ENCODE measurements at regions of chr4 and their contacts with region 1.

Region 1: DNA sequence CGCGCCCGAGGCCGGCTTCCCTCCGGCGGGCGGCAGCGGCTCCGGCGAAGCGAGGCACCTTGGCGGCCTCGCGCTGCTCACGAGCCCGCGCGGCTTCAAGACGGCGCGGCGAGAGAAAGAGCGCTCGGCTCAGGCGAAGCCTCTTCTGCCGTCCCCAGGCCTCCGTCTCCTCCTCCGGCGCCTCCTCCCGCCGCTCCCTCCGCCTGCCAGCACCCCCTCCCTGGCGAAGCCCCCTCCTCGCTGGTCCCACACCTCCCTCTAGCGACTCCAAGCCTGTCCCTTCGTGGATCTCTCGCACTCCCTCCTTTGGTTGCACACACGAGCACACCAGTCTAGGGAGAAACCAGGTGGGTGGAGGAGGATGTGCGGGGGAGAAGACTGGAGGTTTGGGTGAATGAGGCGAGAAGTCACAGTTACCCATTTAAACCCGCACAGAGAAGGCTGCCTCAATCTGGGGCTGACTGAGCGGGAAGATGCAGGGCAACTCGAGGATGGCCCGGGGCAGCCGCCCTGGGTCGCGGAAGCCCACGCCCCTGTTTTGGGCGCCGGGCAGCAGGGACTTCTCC is at the start of gene CAMK2D:
- DNase-seq: peak; percentile 93
- H3K4me3 Mint-ChIP-seq: peak within 1 kb of the TSS; percentile 89
- H3K27ac Mint-ChIP-seq: peak within 1 kb of the TSS; percentile 93
- H3K4me1 Mint-ChIP-seq: peaks cover 38% of the 10 kb centered on the region
- H3K27me3 Mint-ChIP-seq: peaks cover 2% of the 10 kb centered on the region
- total RNA-seq, gene CAMK2D: 82.5 to 82.9 TPM

Region 2: DNA sequence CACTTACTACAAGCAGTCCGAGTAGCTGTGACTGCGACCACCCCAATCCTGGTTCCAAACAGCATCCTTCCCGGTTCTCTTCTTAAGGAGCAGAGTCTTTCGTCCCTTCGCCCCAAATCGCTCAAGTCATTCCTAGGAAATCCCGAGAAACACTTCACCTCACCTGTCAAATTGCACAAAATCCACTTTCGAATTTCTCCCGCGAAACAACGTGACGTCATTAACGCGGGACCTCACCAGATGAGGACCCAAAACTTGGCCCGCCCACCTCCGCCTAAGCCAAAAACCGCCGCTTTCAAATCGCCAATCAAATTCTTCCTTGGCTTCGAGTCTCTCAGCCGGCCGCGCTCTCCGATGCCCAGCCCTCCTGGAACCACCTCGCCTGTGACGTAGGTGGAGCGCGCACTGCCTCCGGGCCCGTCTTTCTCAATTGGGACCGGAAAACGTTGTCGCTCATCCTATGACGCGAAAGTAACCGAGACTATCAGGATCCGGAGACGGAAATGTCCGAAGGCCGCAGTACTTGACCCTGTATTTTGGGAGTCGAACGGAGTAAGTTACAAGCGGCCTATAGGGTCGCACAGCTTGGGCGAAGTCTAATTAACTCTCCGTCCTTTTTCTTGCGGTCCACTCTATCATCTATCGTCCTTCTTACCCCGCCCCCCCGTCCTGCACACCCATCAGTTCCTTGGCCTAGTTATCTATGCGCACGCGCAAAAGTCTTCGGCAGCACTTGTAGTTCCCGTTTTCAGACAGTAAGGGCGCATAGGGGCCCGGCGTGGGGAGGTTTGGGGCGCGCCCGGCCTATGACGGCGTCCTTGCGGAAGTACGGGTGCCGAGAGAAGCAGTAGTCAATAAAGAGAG is 1124.8 kb before region 1 on chr4 and contains the starts of genes LARP7 and ZGRF1:
- CTCF ChIA-PET with region 1: no interaction called
- POLR2A ChIA-PET with region 1: no interaction called
- intact Hi-C with region 1: loop called (anchors 2 kb)
- DNase-seq: peak; percentile 99
- H3K4me3 Mint-ChIP-seq: no peak within 1 kb of the TSS
- H3K27ac Mint-ChIP-seq: no peak within 1 kb of the TSS
- H3K4me1 Mint-ChIP-seq: peaks cover 33% of the 10 kb centered on the region
- H3K27me3 Mint-ChIP-seq: no peaks in the 10 kb centered on the region
- total RNA-seq, gene LARP7: 40.9 to 41.3 TPM
- total RNA-seq, gene ZGRF1: 32.9 to 36.6 TPM

Region 3: DNA sequence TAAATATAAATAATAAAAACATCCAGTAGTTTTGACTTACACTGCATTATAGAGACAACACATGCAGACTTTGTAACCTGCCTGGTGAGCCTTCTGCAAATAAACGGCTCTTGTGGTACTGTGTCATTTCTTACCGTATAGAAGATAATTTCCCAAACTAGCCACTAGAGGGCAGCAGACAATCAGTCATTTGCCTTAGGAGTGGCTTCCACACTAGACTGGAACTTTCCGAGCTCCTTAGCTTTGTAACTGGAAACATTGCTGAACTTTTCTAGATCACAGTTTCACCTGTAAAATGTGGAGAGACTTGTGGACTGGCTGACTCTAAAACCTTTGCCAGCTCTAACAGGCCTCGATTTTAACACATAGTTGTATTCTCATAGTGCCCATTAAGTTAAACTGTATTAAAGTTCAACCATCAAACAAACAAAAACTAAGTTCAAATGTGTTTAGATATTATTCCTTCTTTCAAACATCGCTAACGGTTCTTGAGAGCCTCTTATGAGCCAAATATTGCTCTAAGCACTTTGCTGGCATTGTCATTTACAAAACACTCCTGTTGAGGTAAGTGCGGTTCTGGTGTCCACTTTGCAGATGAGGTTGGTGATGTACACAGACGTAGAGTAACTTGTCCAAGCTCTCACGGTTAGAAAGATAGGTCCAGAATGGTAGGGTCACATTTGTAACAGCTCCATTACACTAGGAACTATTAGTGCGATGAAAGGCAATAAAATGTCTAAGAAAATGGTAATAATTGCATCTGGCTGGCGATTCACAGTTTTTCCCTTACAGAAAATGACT is 366.8 kb before region 1 on chr4:
- CTCF ChIA-PET with region 1: interaction called, 7 read pairs
- POLR2A ChIA-PET with region 1: no interaction called
- intact Hi-C with region 1: loop called (anchors 1 kb)
- DNase-seq: peak; percentile 43
- H3K4me3 Mint-ChIP-seq: no peak overlapping the region
- H3K27ac Mint-ChIP-seq: no peak overlapping the region
- H3K4me1 Mint-ChIP-seq: peaks cover 6% of the 10 kb centered on the region
- H3K27me3 Mint-ChIP-seq: peaks cover 2% of the 10 kb centered on the region

Region 4: GRCh38 chr4:113547487-113548042 is 214.1 kb before region 1 on chr4:
- CTCF ChIA-PET with region 1: interaction called, 8 read pairs
- POLR2A ChIA-PET with region 1: interaction called, 4 read pairs
- intact Hi-C with region 1: loop called (anchors 1 kb)
- DNase-seq: peak; percentile 95
- H3K4me3 Mint-ChIP-seq: peak overlapping the region; percentile 12
- H3K27ac Mint-ChIP-seq: peak overlapping the region; percentile 21
- H3K4me1 Mint-ChIP-seq: peaks cover 21% of the 10 kb centered on the region
- H3K27me3 Mint-ChIP-seq: no peaks in the 10 kb centered on the region

Region 5: DNA sequence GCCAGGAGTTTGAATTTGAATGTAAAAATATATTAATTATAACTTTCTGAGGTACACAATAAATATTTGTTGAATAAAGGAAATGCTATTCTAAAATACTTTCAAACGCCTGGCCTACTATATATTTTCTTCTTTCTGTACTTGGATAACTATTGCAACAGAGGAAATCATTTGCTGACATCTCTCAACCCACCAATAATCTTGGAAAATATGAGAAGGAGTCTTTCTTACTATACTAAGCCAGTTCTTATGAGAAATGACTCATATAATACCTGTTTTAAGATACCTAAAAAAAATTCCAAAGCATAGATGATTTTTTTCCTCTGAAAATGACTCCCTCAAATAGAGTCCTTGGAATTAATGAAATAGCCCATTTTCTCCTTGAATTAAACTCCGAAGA is 64.3 kb before region 1 on chr4:
- CTCF ChIA-PET with region 1: no interaction called
- POLR2A ChIA-PET with region 1: no interaction called
- intact Hi-C with region 1: loop called (anchors 1 kb)
- DNase-seq: no peak
- H3K4me3 Mint-ChIP-seq: no peak overlapping the region
- H3K27ac Mint-ChIP-seq: peak overlapping the region; percentile 67
- H3K4me1 Mint-ChIP-seq: peaks cover 36% of the 10 kb centered on the region
- H3K27me3 Mint-ChIP-seq: no peaks in the 10 kb centered on the region

Region 6: DNA sequence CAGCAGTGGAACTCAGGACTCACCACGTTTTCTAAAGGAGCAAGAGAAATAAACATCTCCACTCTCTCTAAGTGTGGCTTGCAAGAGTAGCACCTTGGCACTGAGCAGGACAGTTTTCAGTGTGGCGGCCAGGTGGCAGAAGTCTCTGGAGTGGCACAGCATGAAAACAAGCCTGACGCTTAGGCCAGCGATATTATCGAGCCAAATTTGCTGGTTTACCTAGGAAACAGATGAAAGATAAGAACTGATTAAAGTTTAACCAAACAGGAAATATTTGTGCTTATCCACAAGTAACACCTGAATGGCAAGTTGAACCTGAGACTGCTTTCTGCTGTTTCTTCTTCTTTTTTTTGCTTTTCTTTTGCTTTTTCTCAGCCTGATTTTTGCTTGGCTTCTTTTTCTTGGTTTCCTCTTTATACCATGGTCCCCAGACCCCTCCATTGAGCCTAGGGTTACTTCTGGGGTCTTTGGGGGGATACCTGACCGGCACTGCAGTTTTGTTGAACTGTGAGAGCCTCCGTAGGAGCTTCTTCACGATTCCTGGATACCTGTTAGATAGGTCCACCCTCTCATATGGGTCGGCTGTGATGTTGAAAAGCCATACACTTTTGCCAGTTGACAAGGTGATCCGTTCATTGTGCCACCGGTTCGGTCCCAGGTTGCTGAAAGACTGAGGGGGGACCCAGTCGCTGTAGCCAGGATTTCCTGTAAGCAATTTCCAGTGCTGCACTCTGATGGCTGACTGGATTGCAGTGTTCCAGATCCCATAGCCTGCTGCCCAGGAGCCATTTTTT is 140.5 kb after region 1 on chr4:
- CTCF ChIA-PET with region 1: no interaction called
- POLR2A ChIA-PET with region 1: no interaction called
- intact Hi-C with region 1: loop called (anchors 1 kb)
- DNase-seq: peak; percentile 80
- H3K4me3 Mint-ChIP-seq: peak overlapping the region; percentile 76
- H3K27ac Mint-ChIP-seq: peak overlapping the region; percentile 68
- H3K4me1 Mint-ChIP-seq: peaks cover 62% of the 10 kb centered on the region
- H3K27me3 Mint-ChIP-seq: no peaks in the 10 kb centered on the region

Measured in activated CD4-positive, alpha-beta memory T cell treated with anti-CD3 and anti-CD28 coated beads for 36 hours (primary cell).